Endothelial cell of umbilical vein (primary cell): ENCODE measurements at regions of chr6 and their contacts with region 1.

Region 1: DNA sequence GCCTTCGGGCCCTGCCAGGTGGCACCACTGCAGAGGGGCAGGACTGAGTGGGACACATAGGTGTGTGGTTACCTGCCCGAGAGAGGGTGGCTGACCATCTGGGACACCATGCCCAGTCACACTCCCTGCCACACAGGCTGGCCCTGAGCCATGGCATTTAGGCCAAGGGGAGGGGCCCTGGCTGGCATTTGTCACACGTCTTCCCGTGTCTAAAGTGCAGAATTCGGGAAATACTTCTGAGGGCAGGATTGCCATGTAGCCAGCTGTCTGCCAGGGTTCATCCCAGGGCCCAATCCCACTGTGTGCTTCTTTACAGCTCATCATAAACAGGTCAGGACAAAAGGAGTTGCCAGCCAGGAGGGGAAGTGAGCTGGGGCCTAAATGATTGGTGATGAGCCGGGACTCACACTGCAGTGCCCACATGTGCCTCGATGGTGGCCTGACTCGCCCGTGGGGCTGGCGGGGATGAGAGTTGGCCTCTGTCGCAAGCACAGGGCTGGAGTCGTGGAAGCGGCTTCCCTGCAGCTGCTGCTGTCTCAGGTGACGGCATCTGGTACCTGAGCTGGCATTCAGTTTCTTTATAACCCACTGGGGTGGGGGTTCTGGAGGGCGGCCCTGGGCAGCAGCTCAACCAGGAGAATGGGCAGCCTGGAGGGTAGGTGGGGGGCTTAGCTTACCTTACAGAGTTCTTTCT is 5.9 kb upstream of the UNC93A start:
- DNase-seq: no peak
- H3K4me3 ChIP-seq: no peak overlapping the region
- H3K27ac ChIP-seq: no peak overlapping the region
- H3K4me1 ChIP-seq: no peaks in the 10 kb centered on the region
- H3K27me3 ChIP-seq: no peaks in the 10 kb centered on the region
- CTCF ChIP-seq: no peak
- POLR2A ChIP-seq: no peak

Region 2: GRCh38 chr6:166907373-166907841 is 377.8 kb before region 1 on chr6:
- CTCF ChIA-PET with region 1: no interaction called
- POLR2A ChIA-PET with region 1: no interaction called
- dilution Hi-C with region 1: no loop called
- intact Hi-C with region 1: no loop called
- DNase-seq: no peak
- H3K4me3 ChIP-seq: no peak overlapping the region
- H3K27ac ChIP-seq: no peak overlapping the region
- H3K4me1 ChIP-seq: no peaks in the 10 kb centered on the region
- H3K27me3 ChIP-seq: no peaks in the 10 kb centered on the region
- CTCF ChIP-seq: no peak
- POLR2A ChIP-seq: no peak

Region 3: GRCh38 chr6:167212713-167213005 is 72.6 kb before region 1 on chr6:
- CTCF ChIA-PET with region 1: no interaction called
- POLR2A ChIA-PET with region 1: no interaction called
- dilution Hi-C with region 1: no loop called
- intact Hi-C with region 1: loop called (anchors 1 kb)
- DNase-seq: no peak
- H3K4me3 ChIP-seq: no peak overlapping the region
- H3K27ac ChIP-seq: no peak overlapping the region
- H3K4me1 ChIP-seq: no peaks in the 10 kb centered on the region
- H3K27me3 ChIP-seq: no peaks in the 10 kb centered on the region
- CTCF ChIP-seq: no peak
- POLR2A ChIP-seq: no peak

Region 4: GRCh38 chr6:167329014-167329413 is 43.8 kb after region 1 on chr6:
- CTCF ChIA-PET with region 1: no interaction called
- POLR2A ChIA-PET with region 1: no interaction called
- dilution Hi-C with region 1: no loop called
- intact Hi-C with region 1: no loop called
- DNase-seq: no peak
- H3K4me3 ChIP-seq: no peak overlapping the region
- H3K27ac ChIP-seq: no peak overlapping the region
- H3K4me1 ChIP-seq: no peaks in the 10 kb centered on the region
- H3K27me3 ChIP-seq: no peaks in the 10 kb centered on the region
- CTCF ChIP-seq: no peak
- POLR2A ChIP-seq: no peak

Region 5: DNA sequence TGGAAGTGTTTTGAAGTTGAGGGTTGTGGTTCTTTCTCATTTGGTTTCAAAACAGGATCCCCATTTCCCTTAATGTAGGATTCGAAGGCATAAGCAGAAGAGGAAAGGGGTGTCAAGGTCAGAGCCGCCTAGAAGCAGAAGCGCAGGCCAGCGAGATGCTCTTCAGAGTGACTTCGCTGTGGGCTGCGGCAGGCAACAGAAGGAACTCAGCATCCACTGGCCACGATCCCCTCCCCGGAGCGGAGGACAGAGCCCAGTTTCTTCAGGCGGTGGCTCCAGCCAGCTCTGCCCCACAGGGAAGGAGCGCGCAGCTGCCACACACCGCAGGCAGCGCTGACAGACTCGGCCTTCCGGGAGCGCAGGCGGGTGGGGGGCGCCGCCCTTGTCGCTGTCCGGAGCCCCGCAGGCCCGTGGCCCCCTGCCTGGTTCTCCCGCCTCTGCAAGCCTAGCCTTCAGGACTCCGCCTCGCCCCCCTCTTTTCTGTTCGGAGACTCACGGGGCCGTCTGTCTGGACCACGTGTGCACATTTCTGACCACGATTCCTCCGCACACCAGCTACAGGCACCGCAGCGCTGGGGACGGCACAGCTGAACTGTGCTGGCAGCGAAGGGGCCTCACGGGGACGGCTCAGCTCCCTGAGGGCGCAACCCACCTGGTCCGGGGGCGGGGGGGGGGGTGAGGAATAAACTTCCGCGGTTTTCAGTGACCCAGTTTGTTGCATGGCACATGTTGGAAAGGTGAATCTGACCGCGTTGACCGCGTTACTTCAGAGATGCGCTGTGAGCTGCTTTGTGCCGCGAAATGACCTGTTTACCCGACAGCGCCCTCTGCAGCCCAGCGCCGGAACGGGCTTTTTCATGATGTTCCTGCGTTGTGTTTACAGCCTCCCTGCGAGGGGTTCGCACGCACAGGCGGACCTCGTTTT is 65.8 kb after region 1 on chr6:
- CTCF ChIA-PET with region 1: interaction called, 14 read pairs
- POLR2A ChIA-PET with region 1: no interaction called
- dilution Hi-C with region 1: no loop called
- intact Hi-C with region 1: loop called (anchors 2 kb)
- DNase-seq: peak; percentile 76
- H3K4me3 ChIP-seq: peak overlapping the region in 2 of 3 experiments; percentile 23 to 33
- H3K27ac ChIP-seq: no peak overlapping the region
- H3K4me1 ChIP-seq: peaks cover 6% of the 10 kb centered on the region
- H3K27me3 ChIP-seq: peaks cover 0 to 5% of the 10 kb centered on the region in 2 experiments
- CTCF ChIP-seq: peak; percentile 83 to 86
- POLR2A ChIP-seq: no peak

Region 6: DNA sequence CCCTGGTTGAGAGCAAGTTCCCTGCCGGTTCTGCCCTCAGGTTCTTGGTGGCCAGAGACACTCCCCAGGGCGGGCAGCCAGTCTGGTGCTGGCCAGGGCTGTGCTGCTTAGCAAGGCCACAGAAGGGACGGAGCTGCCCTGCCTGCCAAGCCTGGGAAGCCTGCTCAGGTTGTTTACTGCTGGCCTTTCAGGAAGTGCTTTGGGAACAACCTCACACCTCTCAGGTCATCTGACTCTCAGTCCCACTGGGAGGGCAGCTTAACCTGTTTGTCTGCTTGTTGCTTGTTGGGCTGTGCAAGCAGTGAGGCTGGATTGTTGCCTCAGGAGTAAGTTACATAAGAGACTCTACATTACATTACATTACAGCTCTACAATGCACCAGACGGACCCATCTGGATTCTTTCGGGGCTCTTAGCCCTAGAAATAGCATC is 465.7 kb after region 1 on chr6:
- CTCF ChIA-PET with region 1: no interaction called
- POLR2A ChIA-PET with region 1: no interaction called
- dilution Hi-C with region 1: no loop called
- intact Hi-C with region 1: no loop called
- DNase-seq: no peak
- H3K4me3 ChIP-seq: no peak overlapping the region
- H3K27ac ChIP-seq: no peak overlapping the region
- H3K4me1 ChIP-seq: no peaks in the 10 kb centered on the region
- H3K27me3 ChIP-seq: no peaks in the 10 kb centered on the region
- CTCF ChIP-seq: no peak
- POLR2A ChIP-seq: no peak

Region 7: GRCh38 chr6:167898673-167899311 is 613.6 kb after region 1 on chr6:
- CTCF ChIA-PET with region 1: no interaction called
- POLR2A ChIA-PET with region 1: no interaction called
- dilution Hi-C with region 1: no loop called
- intact Hi-C with region 1: loop called (anchors 1 kb)
- DNase-seq: peak; percentile 41
- H3K4me3 ChIP-seq: no peak overlapping the region
- H3K27ac ChIP-seq: no peak overlapping the region
- H3K4me1 ChIP-seq: no peaks in the 10 kb centered on the region
- H3K27me3 ChIP-seq: no peaks in the 10 kb centered on the region
- CTCF ChIP-seq: peak; percentile 44 to 52
- POLR2A ChIP-seq: no peak